Heart left ventricle (tissue), 16 donors: ENCODE measurements at regions of chr3 and their contacts with region 1.

Region 1: GRCh38 chr3:75001330-75001729 is 386.9 kb upstream of the CNTN3 start:
- DNase-seq: no peak
- ATAC-seq: no peak
- H3K4me3 ChIP-seq: no peak overlapping the region
- H3K27ac ChIP-seq: no peak overlapping the region
- H3K4me1 ChIP-seq: no peaks in the 10 kb centered on the region
- H3K27me3 ChIP-seq: peaks cover 0 to 3% (median 0%) of the 10 kb centered on the region in 9 donors
- CTCF ChIP-seq: peak in 11 of 12 donors; percentile 15 to 55 (median 36)
- POLR2A ChIP-seq: no peak

Region 2: GRCh38 chr3:73868688-73869315 is 1132.5 kb before region 1 on chr3:
- intact Hi-C with region 1: loop called in 5 of 10 experiments (anchors 5 to 10 kb)
- DNase-seq: peak in 2 of 5 donors; percentile 19 to 26
- ATAC-seq: peak in 3 of 4 donors; percentile 33 to 57 (median 56)
- H3K4me3 ChIP-seq: no peak overlapping the region
- H3K27ac ChIP-seq: no peak overlapping the region
- H3K4me1 ChIP-seq: no peaks in the 10 kb centered on the region
- H3K27me3 ChIP-seq: no peaks in the 10 kb centered on the region
- CTCF ChIP-seq: peak; percentile 11 to 64 (median 52)
- POLR2A ChIP-seq: no peak

Region 3: GRCh38 chr3:73874601-73875369 is 1126.5 kb before region 1 on chr3:
- intact Hi-C with region 1: loop called in 5 of 10 experiments (anchors 5 to 10 kb)
- DNase-seq: no peak
- ATAC-seq: no peak
- H3K4me3 ChIP-seq: no peak overlapping the region
- H3K27ac ChIP-seq: no peak overlapping the region
- H3K4me1 ChIP-seq: no peaks in the 10 kb centered on the region
- H3K27me3 ChIP-seq: no peaks in the 10 kb centered on the region
- CTCF ChIP-seq: no peak
- POLR2A ChIP-seq: no peak

Region 4: DNA sequence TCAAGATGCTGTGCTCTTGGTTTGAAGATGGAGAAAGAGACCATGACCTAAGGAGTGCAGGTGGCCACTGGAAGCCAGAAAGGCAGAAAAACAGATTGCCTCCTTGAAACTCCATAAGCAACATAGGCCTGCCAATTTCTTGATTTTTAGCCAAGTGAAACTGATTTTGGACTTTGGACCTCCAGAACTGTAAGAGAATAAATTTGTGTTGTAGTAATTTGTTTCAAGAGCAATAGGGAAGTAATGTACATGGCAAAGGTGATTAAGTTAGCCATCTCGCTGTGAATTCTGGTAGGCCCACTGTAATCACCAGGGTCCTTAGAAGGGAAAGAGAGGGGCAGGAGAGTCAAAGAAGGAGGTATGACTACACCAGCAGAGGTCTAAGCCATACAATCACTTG is 625.7 kb before region 1 on chr3:
- intact Hi-C with region 1: loop called in 1 of 10 experiments (anchors 5 kb)
- DNase-seq: no peak
- ATAC-seq: no peak
- H3K4me3 ChIP-seq: no peak overlapping the region
- H3K27ac ChIP-seq: no peak overlapping the region
- H3K4me1 ChIP-seq: no peaks in the 10 kb centered on the region
- H3K27me3 ChIP-seq: no peaks in the 10 kb centered on the region
- CTCF ChIP-seq: no peak
- POLR2A ChIP-seq: no peak